Activated naive CD4-positive, alpha-beta T cell treated with anti-CD3 and anti-CD28 coated beads for 36 hours (primary cell): ENCODE measurements at regions of chr5 and their contacts with region 1.

Region 1: GRCh38 chr5:77030097-77031071 is at the start of gene AGGF1:
- DNase-seq: peak; percentile 96
- H3K4me3 Mint-ChIP-seq: peak within 1 kb of the TSS; percentile 91
- H3K27ac Mint-ChIP-seq: peak within 1 kb of the TSS; percentile 88
- H3K4me1 Mint-ChIP-seq: peaks cover 23% of the 10 kb centered on the region
- H3K27me3 Mint-ChIP-seq: no peaks in the 10 kb centered on the region
- total RNA-seq, gene AGGF1: 20.3 to 23.0 TPM

Region 2: GRCh38 chr5:76818844-76819831 is 211.2 kb before region 1 on chr5 and contains the start of gene F2RL1:
- CTCF ChIA-PET with region 1: no interaction called
- intact Hi-C with region 1: loop called (anchors 1 kb)
- DNase-seq: peak; percentile 67
- H3K4me3 Mint-ChIP-seq: peak within 1 kb of the TSS; percentile 80
- H3K27ac Mint-ChIP-seq: no peak within 1 kb of the TSS
- H3K4me1 Mint-ChIP-seq: peaks cover 16% of the 10 kb centered on the region
- H3K27me3 Mint-ChIP-seq: peaks cover 11% of the 10 kb centered on the region
- total RNA-seq, gene F2RL1: 2.9 to 3.0 TPM

Region 3: GRCh38 chr5:77076961-77077823 is 46.8 kb after region 1 on chr5:
- CTCF ChIA-PET with region 1: interaction called, 11 read pairs
- intact Hi-C with region 1: no loop called
- DNase-seq: peak; percentile 61
- H3K4me3 Mint-ChIP-seq: peak overlapping the region; percentile 37
- H3K27ac Mint-ChIP-seq: no peak overlapping the region
- H3K4me1 Mint-ChIP-seq: peaks cover 7% of the 10 kb centered on the region
- H3K27me3 Mint-ChIP-seq: no peaks in the 10 kb centered on the region

Region 4: DNA sequence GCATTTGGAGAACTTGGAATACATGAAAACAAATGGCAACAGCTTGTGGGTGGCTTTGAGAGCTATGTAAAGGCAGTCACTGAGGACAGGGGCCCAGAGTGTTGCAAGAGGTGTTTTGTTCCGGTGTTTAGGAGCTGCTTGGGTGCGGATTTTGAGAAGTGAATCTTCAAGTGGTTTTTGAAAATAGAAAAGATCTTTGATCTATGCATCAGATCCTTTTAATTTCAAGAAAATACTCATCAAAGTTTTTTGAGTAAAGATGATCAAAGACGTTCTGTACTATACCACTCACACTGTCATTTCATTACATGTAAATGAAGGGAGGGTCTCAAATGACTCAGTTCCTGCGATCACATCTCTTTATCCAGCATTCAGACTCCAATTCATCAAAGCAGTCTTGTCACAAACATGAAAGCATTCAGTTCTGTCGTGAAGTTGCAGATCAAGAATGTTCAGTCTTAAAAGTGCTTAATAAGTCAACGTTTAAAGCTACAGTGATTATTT is 349.2 kb after region 1 on chr5:
- CTCF ChIA-PET with region 1: no interaction called
- intact Hi-C with region 1: loop called (anchors 1 kb)
- DNase-seq: peak; percentile 86
- H3K4me3 Mint-ChIP-seq: no peak overlapping the region
- H3K27ac Mint-ChIP-seq: no peak overlapping the region
- H3K4me1 Mint-ChIP-seq: peaks cover 29% of the 10 kb centered on the region
- H3K27me3 Mint-ChIP-seq: peaks cover 14% of the 10 kb centered on the region